CD4-positive, alpha-beta memory T cell (primary cell): ENCODE measurements at regions of chr19 and their contacts with region 1.

Region 1: GRCh38 chr19:52048555-52049501 is at the start of gene ZNF432:
- DNase-seq: peak; percentile 83 to 91 (median 84)
- H3K4me3 ChIP-seq: peak within 1 kb of the TSS; percentile 74 to 75
- H3K4me3 Mint-ChIP-seq: peak within 1 kb of the TSS; percentile 96 to 100 (median 99)
- H3K27ac ChIP-seq: peak within 1 kb of the TSS; percentile 96
- H3K27ac Mint-ChIP-seq: peak within 1 kb of the TSS; percentile 98 to 100 (median 100)
- H3K4me1 ChIP-seq: peaks cover 15% of the 10 kb centered on the region
- H3K4me1 Mint-ChIP-seq: peaks cover 17 to 32% (median 21%) of the 10 kb centered on the region in 4 donors
- H3K27me3 ChIP-seq: no peaks in the 10 kb centered on the region
- H3K27me3 Mint-ChIP-seq: no peaks in the 10 kb centered on the region
- total RNA-seq, gene ZNF432: 23.4 to 23.9 TPM

Region 2: GRCh38 chr19:51926784-51927742 is 121.8 kb before region 1 on chr19 and contains the start of gene ZNF613:
- CTCF ChIA-PET with region 1: no interaction called
- POLR2A ChIA-PET with region 1: interaction called, 5 read pairs
- intact Hi-C with region 1: loop called (anchors 1 kb)
- DNase-seq: peak; percentile 81 to 89 (median 85)
- H3K4me3 ChIP-seq: peak within 1 kb of the TSS; percentile 85 to 91
- H3K4me3 Mint-ChIP-seq: peak within 1 kb of the TSS; percentile 93 to 99 (median 98)
- H3K27ac ChIP-seq: peak within 1 kb of the TSS; percentile 55
- H3K27ac Mint-ChIP-seq: peak within 1 kb of the TSS; percentile 82 to 97 (median 95)
- H3K4me1 ChIP-seq: peaks cover 11% of the 10 kb centered on the region
- H3K4me1 Mint-ChIP-seq: peaks cover 16 to 38% (median 24%) of the 10 kb centered on the region in 4 donors
- H3K27me3 ChIP-seq: no peaks in the 10 kb centered on the region
- H3K27me3 Mint-ChIP-seq: peaks cover 0 to 2% of the 10 kb centered on the region in 2 donors
- total RNA-seq, gene ZNF613: 8.0 to 8.9 TPM

Region 3: DNA sequence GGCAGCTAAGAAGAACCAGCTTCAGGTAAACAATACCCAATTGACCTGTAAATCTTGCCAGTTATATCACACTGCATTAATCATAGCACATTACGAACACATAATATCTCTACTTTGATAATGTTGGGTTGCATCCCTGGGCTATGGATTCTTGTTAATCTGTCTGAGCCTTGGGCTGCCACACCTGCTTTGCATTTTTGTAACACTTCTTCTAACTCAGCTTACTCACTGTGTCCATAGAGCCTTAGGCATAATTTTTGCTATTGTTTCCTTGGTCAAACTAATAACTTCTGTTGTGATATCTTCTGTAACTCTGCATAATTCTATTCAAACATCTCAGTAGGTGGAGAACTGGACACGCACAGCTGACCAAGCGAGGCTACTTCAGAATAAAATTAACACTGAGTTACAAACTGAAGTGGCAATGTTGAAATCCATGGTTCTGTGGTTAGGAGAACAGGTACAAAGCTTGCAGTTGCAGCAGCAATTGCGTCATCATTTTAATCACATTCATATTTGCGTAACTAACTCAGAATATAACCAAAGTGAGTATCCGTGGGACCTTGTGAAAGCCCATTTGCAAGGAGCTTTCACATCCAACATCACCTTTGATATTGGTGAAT is 68.6 kb before region 1 on chr19:
- CTCF ChIA-PET with region 1: no interaction called
- POLR2A ChIA-PET with region 1: no interaction called
- intact Hi-C with region 1: no loop called
- DNase-seq: no peak
- H3K4me3 ChIP-seq: no peak overlapping the region
- H3K4me3 Mint-ChIP-seq: no peak overlapping the region
- H3K27ac ChIP-seq: no peak overlapping the region
- H3K27ac Mint-ChIP-seq: no peak overlapping the region
- H3K4me1 ChIP-seq: peaks cover 3% of the 10 kb centered on the region
- H3K4me1 Mint-ChIP-seq: peaks cover 0 to 23% (median 2%) of the 10 kb centered on the region in 4 donors
- H3K27me3 ChIP-seq: no peaks in the 10 kb centered on the region
- H3K27me3 Mint-ChIP-seq: no peaks in the 10 kb centered on the region

Region 4: DNA sequence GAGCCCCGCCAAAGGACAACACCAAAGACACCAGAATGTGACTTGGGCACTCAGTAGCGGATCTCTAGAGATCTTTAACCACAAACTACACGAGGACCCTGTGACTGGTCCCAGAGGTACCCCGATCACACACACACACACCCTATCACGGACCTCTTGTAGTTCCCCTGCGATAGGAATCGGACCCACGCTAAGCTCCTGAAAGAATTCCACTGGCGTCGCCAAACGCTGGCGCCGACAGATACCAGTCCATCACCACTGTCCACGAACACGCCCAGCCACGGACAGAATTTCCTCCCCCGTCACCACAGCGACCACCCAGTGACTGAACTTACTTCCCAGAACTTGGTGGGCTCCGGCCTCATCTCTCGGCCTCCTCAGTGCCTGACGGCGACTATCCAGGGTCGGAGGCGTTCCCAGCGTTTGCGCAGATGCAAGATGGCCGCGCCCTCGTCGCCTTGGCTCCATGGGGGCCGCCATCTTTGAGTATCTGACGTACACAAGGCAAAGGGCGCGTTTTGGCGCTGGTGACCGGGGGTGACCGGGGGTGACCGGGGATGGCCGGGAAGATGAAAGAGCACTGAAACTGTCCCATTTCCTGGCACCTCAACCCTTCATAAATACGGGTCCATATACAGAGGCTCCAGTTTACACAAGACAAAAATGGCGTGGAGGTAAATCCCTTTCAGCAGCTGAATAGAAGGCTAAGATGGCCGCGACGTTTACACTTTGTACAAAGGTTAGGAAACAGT is 40.8 kb before region 1 on chr19 and contains the start of gene ZNF615:
- CTCF ChIA-PET with region 1: no interaction called
- POLR2A ChIA-PET with region 1: interaction called, 26 read pairs
- intact Hi-C with region 1: loop called (anchors 1 kb)
- DNase-seq: peak; percentile 83 to 92 (median 85)
- H3K4me3 ChIP-seq: peak within 1 kb of the TSS; percentile 67 to 85
- H3K4me3 Mint-ChIP-seq: peak within 1 kb of the TSS; percentile 94 to 98 (median 98)
- H3K27ac ChIP-seq: peak within 1 kb of the TSS; percentile 78
- H3K27ac Mint-ChIP-seq: peak within 1 kb of the TSS; percentile 86 to 99 (median 98)
- H3K4me1 ChIP-seq: peaks cover 8% of the 10 kb centered on the region
- H3K4me1 Mint-ChIP-seq: peaks cover 14 to 17% (median 16%) of the 10 kb centered on the region in 4 donors
- H3K27me3 ChIP-seq: no peaks in the 10 kb centered on the region
- H3K27me3 Mint-ChIP-seq: no peaks in the 10 kb centered on the region
- total RNA-seq, gene ZNF615: 21.5 to 22.4 TPM

Region 5: GRCh38 chr19:52095172-52096014 is 46.6 kb after region 1 on chr19 and contains the start of gene ZNF841:
- CTCF ChIA-PET with region 1: no interaction called
- POLR2A ChIA-PET with region 1: interaction called, 3 read pairs
- intact Hi-C with region 1: loop called (anchors 5 kb)
- DNase-seq: peak; percentile 77 to 84 (median 80)
- H3K4me3 ChIP-seq: peak within 1 kb of the TSS; percentile 55 to 98
- H3K4me3 Mint-ChIP-seq: peak within 1 kb of the TSS; percentile 94 to 99 (median 99)
- H3K27ac ChIP-seq: peak within 1 kb of the TSS; percentile 81
- H3K27ac Mint-ChIP-seq: peak within 1 kb of the TSS; percentile 92 to 98 (median 98)
- H3K4me1 ChIP-seq: peaks cover 17% of the 10 kb centered on the region
- H3K4me1 Mint-ChIP-seq: peaks cover 20 to 41% (median 32%) of the 10 kb centered on the region in 4 donors
- H3K27me3 ChIP-seq: no peaks in the 10 kb centered on the region
- H3K27me3 Mint-ChIP-seq: peaks cover 0 to 1% of the 10 kb centered on the region in 2 donors
- total RNA-seq, gene ZNF841: 48.0 to 56.0 TPM

Region 6: DNA sequence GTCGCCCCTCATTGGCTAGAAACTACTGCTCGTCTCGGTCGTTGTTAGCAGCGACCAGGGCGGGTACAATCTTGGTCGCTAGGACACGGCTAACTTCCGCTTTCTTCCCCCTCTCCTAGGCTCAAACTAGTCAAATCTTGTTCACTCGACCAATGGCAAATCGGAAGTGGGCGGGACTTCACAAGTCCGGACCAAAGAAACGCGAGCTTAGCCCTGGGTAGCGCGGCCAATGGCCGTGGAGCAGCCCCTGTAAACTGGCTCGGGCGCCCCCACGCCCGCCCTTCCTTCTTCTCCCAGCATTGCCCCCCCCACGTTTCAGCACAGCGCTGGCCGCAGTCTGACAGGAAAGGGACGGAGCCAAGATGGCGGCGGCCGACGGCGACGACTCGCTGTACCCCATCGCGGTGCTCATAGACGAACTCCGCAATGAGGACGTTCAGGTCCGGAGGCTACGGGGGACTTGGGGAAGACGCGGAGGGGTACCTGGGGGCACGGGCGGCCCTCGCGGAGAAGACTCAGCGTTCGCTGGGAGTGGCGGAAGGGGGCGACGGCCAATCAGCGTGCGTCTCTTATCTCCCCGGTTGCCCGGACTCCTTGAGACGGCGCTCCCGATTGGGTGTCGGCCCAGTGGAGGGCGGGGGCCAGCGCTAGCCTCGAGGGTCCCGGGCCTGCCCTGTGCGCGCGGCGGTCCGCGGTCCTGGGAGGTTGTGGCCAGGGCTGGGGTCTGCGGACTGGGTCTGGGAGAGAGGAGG is 141.1 kb after region 1 on chr19 and contains the start of gene PPP2R1A:
- CTCF ChIA-PET with region 1: no interaction called
- POLR2A ChIA-PET with region 1: interaction called, 15 read pairs
- intact Hi-C with region 1: no loop called
- DNase-seq: peak; percentile 97 to 100 (median 99)
- H3K4me3 ChIP-seq: peak within 1 kb of the TSS; percentile 75 to 87
- H3K4me3 Mint-ChIP-seq: peak within 1 kb of the TSS; percentile 94 to 99 (median 98)
- H3K27ac ChIP-seq: peak within 1 kb of the TSS; percentile 93
- H3K27ac Mint-ChIP-seq: peak within 1 kb of the TSS; percentile 92 to 100 (median 99)
- H3K4me1 ChIP-seq: peaks cover 53% of the 10 kb centered on the region
- H3K4me1 Mint-ChIP-seq: peaks cover 34 to 58% (median 43%) of the 10 kb centered on the region in 4 donors
- H3K27me3 ChIP-seq: no peaks in the 10 kb centered on the region
- H3K27me3 Mint-ChIP-seq: no peaks in the 10 kb centered on the region
- total RNA-seq, gene PPP2R1A: 166 to 175 TPM

Region 7: GRCh38 chr19:52296773-52297600 is 248.2 kb after region 1 on chr19 and contains the start of gene ZNF480:
- CTCF ChIA-PET with region 1: no interaction called
- POLR2A ChIA-PET with region 1: no interaction called
- intact Hi-C with region 1: loop called (anchors 5 kb)
- DNase-seq: peak; percentile 87 to 89 (median 87)
- H3K4me3 ChIP-seq: peak within 1 kb of the TSS; percentile 89 to 92
- H3K4me3 Mint-ChIP-seq: peak within 1 kb of the TSS; percentile 94 to 99 (median 96)
- H3K27ac ChIP-seq: peak within 1 kb of the TSS; percentile 72
- H3K27ac Mint-ChIP-seq: peak within 1 kb of the TSS; percentile 97 to 100 (median 98)
- H3K4me1 ChIP-seq: peaks cover 16% of the 10 kb centered on the region
- H3K4me1 Mint-ChIP-seq: peaks cover 17 to 24% (median 19%) of the 10 kb centered on the region in 4 donors
- H3K27me3 ChIP-seq: no peaks in the 10 kb centered on the region
- H3K27me3 Mint-ChIP-seq: peaks cover 0 to 3% of the 10 kb centered on the region in 2 donors
- total RNA-seq, gene ZNF480: 26.7 to 26.9 TPM